MCF 10A (cell line): ENCODE measurements at regions of chr1 and their contacts with region 1.

Region 1: GRCh38 chr1:235504496-235505222 is 407 bp upstream of the B3GALNT2 start:
- DNase-seq: peak; percentile 100
- H3K4me3 Mint-ChIP-seq: peak overlapping the region; percentile 97
- H3K27ac Mint-ChIP-seq: peak overlapping the region; percentile 98
- H3K4me1 Mint-ChIP-seq: peaks cover 31% of the 10 kb centered on the region
- H3K27me3 Mint-ChIP-seq: no peaks in the 10 kb centered on the region
- CTCF ChIP-seq: peak; percentile 99

Region 2: GRCh38 chr1:235093696-235094592 is 410.7 kb before region 1 on chr1:
- CTCF ChIA-PET with region 1: interaction called, 5 read pairs
- POLR2A ChIA-PET with region 1: no interaction called
- intact Hi-C with region 1: loop called (anchors 1 kb)
- DNase-seq: peak; percentile 83
- H3K4me3 Mint-ChIP-seq: no peak overlapping the region
- H3K27ac Mint-ChIP-seq: no peak overlapping the region
- H3K4me1 Mint-ChIP-seq: peaks cover 6% of the 10 kb centered on the region
- H3K27me3 Mint-ChIP-seq: no peaks in the 10 kb centered on the region
- CTCF ChIP-seq: peak; percentile 100

Region 3: DNA sequence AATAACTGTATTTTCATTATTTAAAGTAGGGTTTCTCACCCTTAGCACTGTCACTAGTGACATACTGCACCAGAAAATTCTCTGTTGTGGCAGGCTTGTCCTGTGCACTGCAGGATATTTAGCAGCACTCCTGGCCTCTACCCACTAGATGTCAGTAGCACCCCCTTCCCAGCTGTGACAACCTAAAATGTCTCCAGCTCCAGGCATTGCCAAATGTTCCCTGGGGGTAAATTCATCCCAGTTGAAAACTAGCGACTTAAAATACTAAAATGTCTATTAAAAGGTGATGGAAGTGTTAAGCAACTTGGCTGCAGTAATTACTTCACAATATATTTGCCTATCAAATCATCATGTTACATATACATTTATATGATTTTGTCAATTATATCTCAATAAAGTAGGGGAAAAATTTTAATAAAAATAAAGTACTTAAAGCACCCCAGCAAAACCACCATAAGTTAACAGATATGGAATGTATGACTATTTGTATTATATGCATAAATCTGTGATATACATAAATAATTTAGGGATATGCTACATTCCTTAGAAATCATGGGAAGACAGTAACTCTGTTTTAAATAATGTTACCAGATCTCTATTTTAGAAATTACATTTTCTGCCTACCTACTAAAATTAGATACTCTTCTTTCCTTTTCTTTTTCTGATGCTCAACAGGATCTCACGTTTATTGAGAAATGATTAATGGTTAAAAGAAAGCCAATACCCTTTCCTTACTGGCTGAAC is 251.3 kb before region 1 on chr1:
- CTCF ChIA-PET with region 1: interaction called, 4 read pairs
- POLR2A ChIA-PET with region 1: interaction called, 5 read pairs
- intact Hi-C with region 1: loop called (anchors 2 kb)
- DNase-seq: peak; percentile 95
- H3K4me3 Mint-ChIP-seq: no peak overlapping the region
- H3K27ac Mint-ChIP-seq: peak overlapping the region; percentile 49
- H3K4me1 Mint-ChIP-seq: peaks cover 10% of the 10 kb centered on the region
- H3K27me3 Mint-ChIP-seq: no peaks in the 10 kb centered on the region
- CTCF ChIP-seq: peak; percentile 98

Region 4: DNA sequence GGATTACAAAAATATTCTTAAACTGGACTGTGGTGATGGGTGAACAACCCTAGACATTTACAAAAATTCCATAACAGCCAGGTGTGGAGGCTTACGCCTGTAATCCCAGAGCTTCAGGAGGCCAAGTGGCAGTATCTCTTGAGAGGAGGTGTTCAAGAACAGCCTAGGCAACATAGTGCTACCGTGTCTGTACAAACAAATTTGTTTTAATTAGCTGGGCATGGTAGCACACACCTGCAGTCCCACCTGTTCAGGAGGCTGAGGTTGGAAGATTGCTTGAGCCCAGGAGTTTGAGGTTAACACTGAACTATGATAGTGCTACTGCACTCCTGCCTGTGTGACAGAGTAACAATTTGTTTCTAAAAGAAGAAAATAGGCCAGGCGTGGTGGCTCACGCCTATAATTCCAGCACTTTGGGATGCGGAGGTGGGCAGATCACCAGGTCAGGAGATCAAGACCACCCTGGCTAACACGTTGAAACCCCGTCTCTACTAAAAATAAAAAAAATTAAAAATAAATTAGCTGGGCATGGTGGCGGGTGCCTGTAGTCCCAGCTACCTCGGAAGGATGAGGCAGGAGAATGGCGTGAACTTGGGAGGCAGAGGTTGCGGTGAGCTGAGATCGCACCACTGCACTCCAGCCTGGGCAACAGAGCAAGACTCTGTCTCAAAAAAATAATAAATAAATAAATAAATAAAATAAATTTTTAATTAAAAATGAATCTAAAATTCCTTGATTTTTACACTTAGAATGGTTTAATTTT is 213.7 kb before region 1 on chr1:
- CTCF ChIA-PET with region 1: no interaction called
- POLR2A ChIA-PET with region 1: no interaction called
- intact Hi-C with region 1: no loop called
- DNase-seq: no peak
- H3K4me3 Mint-ChIP-seq: no peak overlapping the region
- H3K27ac Mint-ChIP-seq: no peak overlapping the region
- H3K4me1 Mint-ChIP-seq: peaks cover 32% of the 10 kb centered on the region
- H3K27me3 Mint-ChIP-seq: no peaks in the 10 kb centered on the region
- CTCF ChIP-seq: no peak

Region 5: DNA sequence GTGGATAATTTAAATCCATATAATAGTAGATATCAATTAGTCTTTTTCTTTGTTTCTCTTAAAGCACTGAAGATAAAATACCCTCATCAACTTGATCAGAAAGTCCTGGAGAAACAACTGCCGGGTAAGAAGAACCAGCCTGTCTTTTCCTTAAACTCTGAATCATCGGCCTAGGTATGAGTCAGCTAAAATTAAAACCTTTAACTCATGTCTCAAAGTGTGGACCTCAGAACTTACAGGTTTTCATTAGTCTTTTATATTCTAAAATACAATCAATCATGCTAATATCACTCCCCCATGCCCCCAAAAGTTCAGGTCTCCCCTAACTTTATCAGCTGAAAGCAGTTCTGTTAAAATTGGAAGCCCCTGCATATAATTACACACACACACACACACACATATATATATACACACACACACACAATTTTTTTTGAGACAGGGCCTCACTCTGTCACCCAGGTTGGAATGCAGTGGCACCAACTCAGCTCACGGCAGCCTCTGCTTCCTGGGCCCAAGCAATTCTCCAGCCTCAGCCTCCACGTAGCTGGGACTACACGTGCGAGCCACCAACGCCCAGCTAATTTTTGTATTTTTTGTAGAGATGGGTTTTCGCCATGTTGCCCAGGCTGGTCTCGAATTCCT is 61.8 kb before region 1 on chr1:
- CTCF ChIA-PET with region 1: interaction called, 3 read pairs
- POLR2A ChIA-PET with region 1: interaction called, 25 read pairs
- intact Hi-C with region 1: no loop called
- DNase-seq: peak; percentile 80
- H3K4me3 Mint-ChIP-seq: no peak overlapping the region
- H3K27ac Mint-ChIP-seq: peak overlapping the region; percentile 74
- H3K4me1 Mint-ChIP-seq: peaks cover 19% of the 10 kb centered on the region
- H3K27me3 Mint-ChIP-seq: no peaks in the 10 kb centered on the region
- CTCF ChIP-seq: no peak

Region 6: GRCh38 chr1:235527196-235527814 is 22.6 kb after region 1 on chr1:
- CTCF ChIA-PET with region 1: interaction called, 4 read pairs
- POLR2A ChIA-PET with region 1: interaction called, 15 read pairs
- intact Hi-C with region 1: no loop called
- DNase-seq: no peak
- H3K4me3 Mint-ChIP-seq: no peak overlapping the region
- H3K27ac Mint-ChIP-seq: no peak overlapping the region
- H3K4me1 Mint-ChIP-seq: peaks cover 11% of the 10 kb centered on the region
- H3K27me3 Mint-ChIP-seq: no peaks in the 10 kb centered on the region
- CTCF ChIP-seq: no peak

Region 7: GRCh38 chr1:235648407-235648907 is 143.8 kb after region 1 on chr1:
- CTCF ChIA-PET with region 1: no interaction called
- POLR2A ChIA-PET with region 1: no interaction called
- intact Hi-C with region 1: no loop called
- DNase-seq: no peak
- H3K4me3 Mint-ChIP-seq: peak overlapping the region; percentile 61
- H3K27ac Mint-ChIP-seq: no peak overlapping the region
- H3K4me1 Mint-ChIP-seq: no peaks in the 10 kb centered on the region
- H3K27me3 Mint-ChIP-seq: no peaks in the 10 kb centered on the region
- CTCF ChIP-seq: no peak

Region 8: DNA sequence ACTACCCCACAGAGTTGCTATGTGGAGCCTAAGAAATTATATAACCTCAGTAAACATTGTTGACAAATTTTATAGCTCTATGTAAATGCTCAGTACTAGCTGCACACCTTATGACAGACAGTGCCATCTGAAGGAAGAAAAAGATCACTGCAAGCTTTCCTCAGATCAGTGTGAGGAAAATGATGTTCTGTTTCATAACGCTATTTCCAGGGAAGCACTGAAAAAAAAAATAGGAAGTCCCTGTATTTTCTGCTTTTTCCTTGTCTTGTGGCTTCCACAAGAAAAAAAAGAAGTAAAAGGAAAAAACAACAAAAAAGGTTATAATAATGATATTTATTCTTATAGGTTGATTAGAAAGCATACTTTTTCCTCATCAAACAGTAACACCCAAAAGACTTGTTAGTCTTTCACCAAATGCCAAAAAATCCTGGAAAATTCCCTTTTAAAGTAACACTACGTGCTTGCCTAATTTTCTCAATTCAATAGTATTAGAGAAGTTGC is 338.9 kb after region 1 on chr1:
- CTCF ChIA-PET with region 1: interaction called, 3 read pairs
- POLR2A ChIA-PET with region 1: interaction called, 5 read pairs
- intact Hi-C with region 1: loop called (anchors 2 kb)
- DNase-seq: peak; percentile 76
- H3K4me3 Mint-ChIP-seq: no peak overlapping the region
- H3K27ac Mint-ChIP-seq: no peak overlapping the region
- H3K4me1 Mint-ChIP-seq: no peaks in the 10 kb centered on the region
- H3K27me3 Mint-ChIP-seq: no peaks in the 10 kb centered on the region
- CTCF ChIP-seq: peak; percentile 76

Region 9: DNA sequence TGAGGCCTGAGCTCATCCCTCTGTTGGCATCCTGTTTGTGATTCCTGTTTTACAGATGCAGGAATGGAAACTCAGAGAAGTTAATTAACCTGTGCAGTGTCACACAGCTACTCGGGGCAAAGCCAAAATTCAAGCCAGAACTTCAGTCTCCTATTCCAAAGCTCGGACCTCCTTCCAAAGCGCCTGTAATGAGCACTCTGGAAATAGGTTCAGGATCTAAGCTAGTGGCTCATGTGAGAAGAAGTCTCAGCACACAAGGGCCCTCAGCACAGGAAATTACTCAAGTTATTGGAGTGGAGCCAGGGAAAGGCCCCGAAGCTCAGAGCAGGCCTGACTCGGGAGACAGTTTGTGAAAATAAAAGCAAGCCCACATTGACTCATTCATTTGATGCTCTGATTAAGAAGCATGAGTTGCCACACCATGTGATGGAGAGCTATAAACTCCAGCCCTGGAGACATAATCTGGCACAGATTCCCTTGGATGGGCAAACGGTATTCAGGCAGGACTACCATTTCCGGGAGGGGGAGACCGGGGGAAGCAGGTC is 412.7 kb after region 1 on chr1:
- CTCF ChIA-PET with region 1: interaction called, 4 read pairs
- POLR2A ChIA-PET with region 1: interaction called, 23 read pairs
- intact Hi-C with region 1: no loop called
- DNase-seq: peak; percentile 100
- H3K4me3 Mint-ChIP-seq: peak overlapping the region; percentile 35
- H3K27ac Mint-ChIP-seq: peak overlapping the region; percentile 81
- H3K4me1 Mint-ChIP-seq: peaks cover 55% of the 10 kb centered on the region
- H3K27me3 Mint-ChIP-seq: no peaks in the 10 kb centered on the region
- CTCF ChIP-seq: no peak